ENCODE measurements at regions of chr17 and their contacts with region 1.

Region 1: GRCh38 chr17:30906101-30906911 is at the start of gene TEFM:
- DNase-seq: peak; percentile 88 to 94
- H3K4me3 ChIP-seq: peak within 1 kb of the TSS; percentile 80
- H3K4me1 ChIP-seq: no peaks in the 10 kb centered on the region; the same call in none of the 2 replicates
- H3K27me3 ChIP-seq: no peaks in the 10 kb centered on the region

Region 2: GRCh38 chr17:30222721-30223175 is 683.6 kb before region 1 on chr17:
- in situ Hi-C with region 1: no loop called
- DNase-seq: no peak
- H3K4me3 ChIP-seq: no peak overlapping the region
- H3K4me1 ChIP-seq: no peaks in the 10 kb centered on the region
- H3K27me3 ChIP-seq: no peaks in the 10 kb centered on the region

Region 3: DNA sequence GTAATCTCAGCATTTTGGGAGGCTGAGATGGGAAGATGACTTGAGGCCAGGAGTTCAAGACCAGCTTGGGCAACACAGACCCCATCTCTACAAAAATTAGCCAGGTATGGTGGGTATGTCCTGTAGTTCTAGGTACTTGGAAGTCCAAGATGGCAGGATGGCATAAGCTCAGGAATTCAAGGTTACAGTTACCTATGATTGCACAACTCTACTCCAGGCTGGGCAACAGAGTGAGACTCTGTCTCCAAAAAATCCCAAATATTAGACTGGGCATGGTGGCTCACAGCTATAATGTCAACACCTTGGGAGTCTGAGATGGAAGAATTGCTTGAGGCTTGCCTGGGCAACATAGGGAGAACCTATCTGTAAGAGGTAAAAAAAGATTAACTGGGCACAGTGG is 145.2 kb before region 1 on chr17:
- in situ Hi-C with region 1: no loop called
- DNase-seq: no peak
- H3K4me3 ChIP-seq: no peak overlapping the region
- H3K4me1 ChIP-seq: no peaks in the 10 kb centered on the region
- H3K27me3 ChIP-seq: no peaks in the 10 kb centered on the region

Region 4: GRCh38 chr17:30992551-30992950 is 86.2 kb after region 1 on chr17:
- in situ Hi-C with region 1: no loop called
- DNase-seq: no peak
- H3K4me3 ChIP-seq: no peak overlapping the region
- H3K4me1 ChIP-seq: no peaks in the 10 kb centered on the region
- H3K27me3 ChIP-seq: no peaks in the 10 kb centered on the region

Region 5: GRCh38 chr17:31549525-31550388 is 643.5 kb after region 1 on chr17:
- in situ Hi-C with region 1: loop called (anchors 25 kb)
- DNase-seq: peak; percentile 84 to 94
- H3K4me3 ChIP-seq: peak overlapping the region; percentile 93
- H3K4me1 ChIP-seq: peaks cover 8% of the 10 kb centered on the region; the same call in 1 of the 2 replicates
- H3K27me3 ChIP-seq: no peaks in the 10 kb centered on the region

Measured in HAP-1 (cell line).